ENCODE measurements at regions of chr1 and their contacts with region 1.

Region 1: DNA sequence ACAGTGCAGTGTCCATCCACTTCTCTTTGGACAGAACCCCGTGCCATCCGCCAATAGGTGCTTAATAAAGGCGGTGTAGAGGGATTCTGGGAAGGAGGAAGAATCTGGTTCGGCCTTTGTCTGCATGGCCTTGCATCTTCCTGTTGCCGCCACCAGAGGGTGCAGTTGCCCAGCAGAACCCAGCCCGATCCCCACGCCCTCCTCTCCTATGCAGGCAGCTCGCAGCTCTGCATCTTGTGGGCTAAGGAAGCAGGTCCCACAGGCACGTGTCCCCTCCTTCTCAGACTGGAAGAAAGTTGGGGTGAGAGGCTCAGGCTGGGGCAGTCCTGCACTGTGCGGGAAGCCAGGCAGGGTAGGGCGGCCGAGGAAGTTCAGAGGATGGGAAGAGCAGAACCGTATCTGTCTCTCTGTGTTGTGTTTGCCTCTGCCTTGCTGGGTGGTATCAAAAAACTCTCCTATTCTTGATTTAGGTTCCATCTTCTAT is 20.8 kb downstream of the NAV1 start:
- DNase-seq: peak; percentile 86
- ATAC-seq: peak; percentile 97
- H3K4me3 Mint-ChIP-seq: no peak overlapping the region
- H3K27ac Mint-ChIP-seq: no peak overlapping the region
- H3K4me1 Mint-ChIP-seq: peaks cover 3% of the 10 kb centered on the region
- H3K27me3 Mint-ChIP-seq: no peaks in the 10 kb centered on the region

Region 2: GRCh38 chr1:201530741-201531531 is 28.8 kb before region 1 on chr1:
- CTCF ChIA-PET with region 1: interaction called, 10 read pairs
- POLR2A ChIA-PET with region 1: no interaction called
- intact Hi-C with region 1: no loop called
- DNase-seq: peak; percentile 76
- ATAC-seq: peak; percentile 76
- H3K4me3 Mint-ChIP-seq: no peak overlapping the region
- H3K27ac Mint-ChIP-seq: no peak overlapping the region
- H3K4me1 Mint-ChIP-seq: peaks cover 7% of the 10 kb centered on the region
- H3K27me3 Mint-ChIP-seq: peaks cover 3% of the 10 kb centered on the region

Region 3: GRCh38 chr1:201703621-201704439 is 144.1 kb after region 1 on chr1:
- CTCF ChIA-PET with region 1: interaction called, 68 read pairs
- POLR2A ChIA-PET with region 1: no interaction called
- intact Hi-C with region 1: loop called (anchors 1 kb)
- DNase-seq: peak; percentile 86
- ATAC-seq: peak; percentile 87
- H3K4me3 Mint-ChIP-seq: no peak overlapping the region
- H3K27ac Mint-ChIP-seq: no peak overlapping the region
- H3K4me1 Mint-ChIP-seq: no peaks in the 10 kb centered on the region
- H3K27me3 Mint-ChIP-seq: no peaks in the 10 kb centered on the region

Region 4: DNA sequence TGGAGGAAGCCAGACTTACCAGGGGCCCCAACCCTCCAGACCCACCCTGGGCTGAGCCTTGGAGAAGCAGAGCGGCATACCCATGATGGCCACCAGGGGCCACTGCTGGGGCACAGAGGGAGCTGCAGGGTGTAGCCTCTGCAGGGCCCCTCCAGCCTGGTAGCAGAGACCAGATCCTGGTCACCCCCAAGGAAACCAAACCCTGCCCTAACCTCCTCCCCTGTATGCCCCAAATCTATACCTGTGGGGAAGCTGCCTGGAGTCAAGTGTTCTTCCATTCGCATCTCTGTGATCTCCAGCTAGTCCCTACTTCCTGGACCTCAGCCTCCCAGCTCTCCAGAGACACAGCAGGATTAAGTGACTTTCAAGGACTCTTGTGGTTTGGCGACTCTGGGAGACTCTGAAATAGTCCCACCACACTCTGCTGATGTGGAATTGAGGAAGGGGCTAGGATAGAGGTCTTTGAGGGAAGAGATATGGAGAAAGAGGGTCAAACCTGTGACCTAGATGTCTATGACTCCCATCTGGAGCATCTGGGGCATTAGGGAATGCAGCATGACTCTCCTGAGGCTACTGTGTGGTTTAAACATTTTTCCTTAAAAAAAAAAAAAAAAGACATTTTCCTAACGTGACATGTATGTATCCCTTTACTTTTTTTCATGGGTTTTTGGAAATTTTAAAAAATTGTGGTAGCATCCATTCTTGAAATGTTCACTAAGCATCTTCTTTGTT is 150.0 kb after region 1 on chr1:
- CTCF ChIA-PET with region 1: interaction called, 68 read pairs
- POLR2A ChIA-PET with region 1: no interaction called
- intact Hi-C with region 1: loop called (anchors 1 kb)
- DNase-seq: peak; percentile 80
- ATAC-seq: peak; percentile 95
- H3K4me3 Mint-ChIP-seq: no peak overlapping the region
- H3K27ac Mint-ChIP-seq: no peak overlapping the region
- H3K4me1 Mint-ChIP-seq: no peaks in the 10 kb centered on the region
- H3K27me3 Mint-ChIP-seq: no peaks in the 10 kb centered on the region

Region 5: DNA sequence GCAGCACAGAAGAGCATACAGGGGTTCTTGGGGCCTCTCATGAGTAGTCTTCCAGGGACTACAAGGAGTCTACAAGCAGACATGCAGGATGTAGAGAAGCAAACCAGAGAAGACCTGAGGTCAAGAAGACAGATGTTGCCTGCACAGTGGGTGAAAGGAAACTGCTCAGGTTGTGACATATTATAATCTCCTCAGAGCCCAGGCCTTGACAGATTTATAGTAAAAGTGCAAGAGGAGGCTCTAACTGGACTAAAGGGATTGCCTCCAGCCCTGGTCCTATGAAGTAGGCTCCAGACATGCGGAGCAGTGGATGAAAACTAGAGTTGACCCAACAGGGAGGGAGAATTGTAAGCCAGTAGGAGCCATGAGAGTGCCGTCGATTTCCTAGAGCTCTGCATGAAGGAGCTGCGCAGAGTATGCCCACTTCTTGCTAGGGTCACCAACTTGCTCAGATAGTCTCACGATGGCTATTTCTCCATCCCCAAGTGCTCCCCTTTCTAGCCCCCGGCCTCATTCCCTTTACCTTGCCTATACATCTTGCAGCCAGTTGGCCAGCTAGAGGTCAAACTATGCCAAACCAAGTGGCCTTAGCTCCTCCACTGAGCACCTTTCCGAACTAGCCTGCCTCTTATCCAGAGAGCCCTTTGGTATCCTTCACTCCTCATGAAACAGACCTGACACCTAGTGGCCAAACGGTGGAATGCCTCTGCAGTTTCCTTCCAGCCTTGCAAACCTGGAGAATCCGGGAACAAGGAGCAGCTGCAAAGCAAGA is 233.0 kb after region 1 on chr1:
- CTCF ChIA-PET with region 1: interaction called, 49 read pairs
- POLR2A ChIA-PET with region 1: no interaction called
- intact Hi-C with region 1: loop called (anchors 1 kb)
- DNase-seq: peak; percentile 72
- ATAC-seq: peak; percentile 80
- H3K4me3 Mint-ChIP-seq: no peak overlapping the region
- H3K27ac Mint-ChIP-seq: no peak overlapping the region
- H3K4me1 Mint-ChIP-seq: peaks cover 6% of the 10 kb centered on the region
- H3K27me3 Mint-ChIP-seq: no peaks in the 10 kb centered on the region

Measured in activated CD4-positive, alpha-beta T cell treated with anti-CD3 and anti-CD28 coated beads for 36 hours (primary cell).